AG04450 (cell line): ENCODE measurements at regions of chr11 and their contacts with region 1.

Region 1: DNA sequence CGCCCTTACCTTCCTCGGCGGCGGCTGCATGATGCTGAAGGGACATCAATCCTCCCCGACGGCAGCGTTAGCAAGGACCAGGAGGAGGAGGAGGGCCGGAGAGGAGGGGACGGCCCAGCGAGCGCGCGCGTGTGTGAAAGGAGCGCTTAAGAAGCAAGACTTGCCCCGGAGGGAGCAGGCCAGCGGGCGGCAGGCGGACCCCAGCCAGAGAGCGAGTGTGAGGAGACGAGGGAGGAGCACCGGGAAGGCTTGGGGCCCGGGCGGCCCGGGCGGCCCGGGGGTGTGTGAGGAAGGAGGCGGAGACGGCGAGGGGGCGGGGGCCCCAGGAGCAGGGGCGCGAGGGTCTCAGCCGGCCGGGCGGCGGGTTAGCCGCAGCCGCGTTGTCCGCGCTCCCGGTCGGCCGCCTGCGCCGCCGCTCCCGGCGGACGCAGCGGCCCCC is 251 bp downstream of the FCHSD2 start:
- DNase-seq: no peak
- H3K4me3 ChIP-seq: peak overlapping the region; percentile 92
- H3K27ac ChIP-seq: peak overlapping the region; percentile 77
- H3K27me3 ChIP-seq: no peaks in the 10 kb centered on the region
- CTCF ChIP-seq: no peak

Region 2: DNA sequence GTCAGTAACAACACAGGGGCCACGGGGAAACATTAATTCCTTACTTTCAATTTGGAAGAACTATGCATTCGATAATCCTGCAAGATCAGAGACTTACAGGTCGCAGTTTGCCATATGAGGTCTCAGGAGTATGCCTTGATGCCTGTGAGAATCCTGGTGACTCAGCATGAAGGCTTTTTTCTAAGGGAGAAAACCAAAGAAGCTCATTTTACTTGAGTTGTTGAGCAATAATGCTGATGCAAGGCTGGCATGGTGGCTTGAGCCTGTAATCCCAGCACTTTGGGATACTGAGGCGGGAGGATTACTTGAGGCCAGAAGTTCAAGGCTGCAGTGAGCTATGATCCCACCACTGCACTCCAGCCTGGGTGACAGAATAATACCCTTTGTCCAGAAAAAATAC is 301.1 kb before region 1 on chr11:
- CTCF ChIA-PET with region 1: interaction called, 13 read pairs
- POLR2A ChIA-PET with region 1: interaction called, 4 read pairs
- DNase-seq: peak; percentile 79
- H3K4me3 ChIP-seq: no peak overlapping the region
- H3K27ac ChIP-seq: peak overlapping the region; percentile 75
- H3K27me3 ChIP-seq: no peaks in the 10 kb centered on the region
- CTCF ChIP-seq: no peak

Region 3: GRCh38 chr11:73099512-73100266 is 42.2 kb before region 1 on chr11:
- CTCF ChIA-PET with region 1: no interaction called
- POLR2A ChIA-PET with region 1: no interaction called
- DNase-seq: no peak
- H3K4me3 ChIP-seq: no peak overlapping the region
- H3K27ac ChIP-seq: no peak overlapping the region
- H3K27me3 ChIP-seq: no peaks in the 10 kb centered on the region
- CTCF ChIP-seq: no peak

Region 4: GRCh38 chr11:73126804-73127480 is 14.9 kb before region 1 on chr11:
- CTCF ChIA-PET with region 1: interaction called, 14 read pairs
- POLR2A ChIA-PET with region 1: no interaction called
- DNase-seq: no peak
- H3K4me3 ChIP-seq: no peak overlapping the region
- H3K27ac ChIP-seq: no peak overlapping the region
- H3K27me3 ChIP-seq: no peaks in the 10 kb centered on the region
- CTCF ChIP-seq: no peak

Region 5: DNA sequence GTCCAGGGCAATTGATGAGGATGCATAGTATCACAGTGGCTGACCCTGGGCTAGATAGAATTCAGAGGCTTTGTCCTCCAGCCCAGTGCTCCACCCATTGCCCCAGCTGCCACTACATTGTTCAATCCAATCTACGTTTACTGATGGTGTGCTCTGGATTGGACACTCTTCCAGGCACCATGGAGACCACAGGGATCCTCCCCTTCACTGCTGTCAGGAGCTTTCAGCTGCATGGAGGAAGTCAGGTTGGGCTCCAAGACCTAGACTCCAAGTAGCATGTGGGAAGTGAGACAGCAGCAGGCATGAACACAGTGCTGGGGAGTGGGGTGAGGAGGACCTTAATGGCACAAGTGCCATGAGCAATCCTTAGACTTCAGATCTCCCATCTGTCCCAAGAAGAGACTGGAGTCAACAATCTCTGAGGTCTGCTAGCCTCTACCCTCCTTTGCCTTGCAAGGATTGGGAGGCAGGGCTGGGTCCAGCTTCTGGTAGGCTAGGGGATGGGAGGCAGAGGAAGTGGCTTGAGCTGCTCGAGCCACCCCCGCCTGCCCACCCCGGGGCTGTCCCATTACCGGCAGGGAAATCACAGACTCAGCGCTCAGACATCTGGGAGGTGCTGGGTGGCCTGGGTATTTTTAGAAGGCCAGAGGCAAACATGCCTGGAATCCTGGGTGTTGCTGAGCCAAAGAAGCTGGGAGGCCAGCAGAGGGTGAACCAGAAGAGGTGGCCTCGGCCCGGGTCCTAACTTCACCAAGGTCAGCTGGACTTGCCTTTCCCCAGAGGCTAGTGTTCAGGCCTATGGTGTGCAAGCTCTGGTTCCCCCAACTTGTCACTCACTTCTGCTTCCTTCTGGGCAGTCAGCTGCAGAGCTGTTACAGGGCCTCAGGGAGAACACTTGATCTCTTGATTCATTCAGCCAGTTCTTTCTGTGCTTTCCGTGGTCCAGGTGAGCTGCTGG is 15.5 kb after region 1 on chr11:
- CTCF ChIA-PET with region 1: interaction called, 33 read pairs
- POLR2A ChIA-PET with region 1: interaction called, 45 read pairs
- DNase-seq: peak; percentile 61
- H3K4me3 ChIP-seq: no peak overlapping the region
- H3K27ac ChIP-seq: peak overlapping the region; percentile 93
- H3K27me3 ChIP-seq: no peaks in the 10 kb centered on the region
- CTCF ChIP-seq: no peak

Region 6: DNA sequence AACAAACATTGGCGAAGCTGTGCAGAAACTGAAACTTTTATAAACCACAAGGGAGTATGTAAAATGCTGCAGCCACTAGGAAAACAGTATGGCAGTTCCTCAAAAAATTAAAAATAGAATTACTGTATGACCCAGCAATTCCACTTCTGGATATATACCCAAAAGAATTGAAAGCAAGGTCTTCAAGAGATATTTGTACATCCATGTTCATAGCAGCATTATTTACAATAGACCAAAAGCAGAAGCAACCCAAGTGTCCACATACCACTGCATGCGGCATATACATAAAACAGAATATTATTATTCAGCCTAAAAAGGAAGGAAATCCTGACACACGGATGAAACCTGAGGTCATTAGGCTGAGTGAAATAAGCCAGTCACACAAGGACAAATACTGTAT is 320.1 kb after region 1 on chr11:
- CTCF ChIA-PET with region 1: no interaction called
- POLR2A ChIA-PET with region 1: no interaction called
- DNase-seq: no peak
- H3K4me3 ChIP-seq: no peak overlapping the region
- H3K27ac ChIP-seq: no peak overlapping the region
- H3K27me3 ChIP-seq: no peaks in the 10 kb centered on the region
- CTCF ChIP-seq: no peak